ENCODE measurements at regions of chr15 and their contacts with region 1.

Region 1: GRCh38 chr15:52227456-52227855 is 36.3 kb upstream of the GNB5 start:
- DNase-seq: peak; percentile 82
- H3K4me3 ChIP-seq: no peak overlapping the region
- H3K27ac ChIP-seq: no peak overlapping the region
- H3K4me1 ChIP-seq: no peaks in the 10 kb centered on the region
- H3K27me3 ChIP-seq: no peaks in the 10 kb centered on the region
- CTCF ChIP-seq: peak; percentile 72 to 76
- POLR2A ChIP-seq: no peak

Region 2: GRCh38 chr15:51782357-51782896 is 445.0 kb before region 1 on chr15:
- CTCF ChIA-PET with region 1: interaction called, 7 read pairs
- POLR2A ChIA-PET with region 1: no interaction called
- dilution Hi-C with region 1: no loop called
- intact Hi-C with region 1: loop called (anchors 5 kb)
- DNase-seq: peak; percentile 25
- H3K4me3 ChIP-seq: no peak overlapping the region
- H3K27ac ChIP-seq: no peak overlapping the region
- H3K4me1 ChIP-seq: no peaks in the 10 kb centered on the region
- H3K27me3 ChIP-seq: peaks cover 0 to 3% of the 10 kb centered on the region in 2 experiments
- CTCF ChIP-seq: peak; percentile 39 to 45
- POLR2A ChIP-seq: no peak

Region 3: GRCh38 chr15:51907136-51907914 is 320.1 kb before region 1 on chr15:
- CTCF ChIA-PET with region 1: interaction called, 4 read pairs
- POLR2A ChIA-PET with region 1: no interaction called
- dilution Hi-C with region 1: no loop called
- intact Hi-C with region 1: loop called (anchors 10 kb)
- DNase-seq: no peak
- H3K4me3 ChIP-seq: no peak overlapping the region
- H3K27ac ChIP-seq: no peak overlapping the region
- H3K4me1 ChIP-seq: no peaks in the 10 kb centered on the region
- H3K27me3 ChIP-seq: no peaks in the 10 kb centered on the region
- CTCF ChIP-seq: no peak
- POLR2A ChIP-seq: no peak

Region 4: GRCh38 chr15:51982013-51982769 is 245.3 kb before region 1 on chr15:
- CTCF ChIA-PET with region 1: interaction called, 9 read pairs
- POLR2A ChIA-PET with region 1: interaction called, 4 read pairs
- dilution Hi-C with region 1: no loop called
- intact Hi-C with region 1: loop called (anchors 1 kb)
- DNase-seq: peak; percentile 94
- H3K4me3 ChIP-seq: peak overlapping the region; percentile 5 to 77 (median 10)
- H3K27ac ChIP-seq: peak overlapping the region; percentile 96
- H3K4me1 ChIP-seq: peaks cover 20% of the 10 kb centered on the region
- H3K27me3 ChIP-seq: no peaks in the 10 kb centered on the region
- CTCF ChIP-seq: peak in 1 of 2 donors; percentile 56
- POLR2A ChIP-seq: peak; percentile 38

Region 5: DNA sequence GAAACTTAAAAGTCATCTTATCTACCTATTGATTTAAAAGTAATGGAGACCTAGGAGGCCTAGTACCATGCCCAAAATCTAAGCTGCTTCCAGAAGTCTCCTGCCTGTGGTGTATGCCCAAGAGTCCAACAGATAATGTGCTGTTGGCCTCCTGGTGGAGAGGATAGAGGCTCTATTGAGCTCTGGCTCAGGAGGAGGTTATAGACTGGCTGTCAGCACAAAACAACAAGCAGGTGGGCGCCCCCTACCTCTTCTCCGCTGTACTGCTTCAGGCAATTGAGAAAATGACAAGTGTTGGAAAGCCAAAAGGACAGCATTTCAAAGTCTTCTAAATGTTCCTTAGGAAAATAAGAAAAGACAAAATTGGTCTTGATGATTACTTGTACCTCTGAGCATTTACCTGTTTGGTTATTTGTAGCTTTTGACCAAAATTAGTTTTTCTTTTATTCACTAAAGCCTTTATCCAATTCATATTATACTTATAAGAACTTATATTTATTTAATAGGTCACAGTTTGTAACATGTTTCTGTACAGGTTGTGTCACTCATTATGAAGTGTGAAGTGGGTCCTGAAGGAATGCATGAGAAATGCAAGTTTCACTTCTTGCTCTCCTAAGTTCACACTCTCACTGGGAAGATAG is 19.0 kb before region 1 on chr15:
- CTCF ChIA-PET with region 1: interaction called, 10 read pairs
- POLR2A ChIA-PET with region 1: no interaction called
- dilution Hi-C with region 1: no loop called
- intact Hi-C with region 1: no loop called
- DNase-seq: peak; percentile 73
- H3K4me3 ChIP-seq: no peak overlapping the region
- H3K27ac ChIP-seq: no peak overlapping the region
- H3K4me1 ChIP-seq: peaks cover 17% of the 10 kb centered on the region
- H3K27me3 ChIP-seq: no peaks in the 10 kb centered on the region
- CTCF ChIP-seq: peak; percentile 71 to 86
- POLR2A ChIP-seq: no peak

Region 6: DNA sequence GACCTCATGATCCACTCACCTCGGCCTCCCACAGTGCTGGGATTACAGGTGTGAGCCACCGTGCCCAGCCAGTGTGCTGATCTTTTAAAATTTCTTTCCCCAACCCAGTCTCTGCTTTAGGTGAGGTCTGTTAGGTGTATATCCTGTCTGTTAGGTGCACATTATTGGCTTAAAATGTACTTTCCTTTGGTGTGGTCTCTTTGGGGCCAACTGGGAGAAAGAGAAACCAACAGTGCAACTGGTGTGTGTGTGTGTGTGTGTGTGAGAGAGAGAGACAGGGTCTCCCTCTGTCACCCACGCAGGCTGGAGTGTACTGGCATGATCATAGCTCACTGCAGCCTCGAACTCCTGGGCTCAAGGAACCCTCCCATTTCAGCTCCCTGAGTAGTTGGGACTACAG is 14.0 kb after region 1 on chr15:
- CTCF ChIA-PET with region 1: interaction called, 27 read pairs
- POLR2A ChIA-PET with region 1: no interaction called
- dilution Hi-C with region 1: no loop called
- intact Hi-C with region 1: no loop called
- DNase-seq: no peak
- H3K4me3 ChIP-seq: no peak overlapping the region
- H3K27ac ChIP-seq: no peak overlapping the region
- H3K4me1 ChIP-seq: no peaks in the 10 kb centered on the region
- H3K27me3 ChIP-seq: no peaks in the 10 kb centered on the region
- CTCF ChIP-seq: no peak
- POLR2A ChIP-seq: no peak

Region 7: GRCh38 chr15:52735231-52736089 is 508.0 kb after region 1 on chr15:
- CTCF ChIA-PET with region 1: interaction called, 9 read pairs
- POLR2A ChIA-PET with region 1: no interaction called
- dilution Hi-C with region 1: no loop called
- intact Hi-C with region 1: loop called (anchors 1 kb)
- DNase-seq: peak; percentile 85
- H3K4me3 ChIP-seq: no peak overlapping the region
- H3K27ac ChIP-seq: no peak overlapping the region
- H3K4me1 ChIP-seq: peaks cover 11% of the 10 kb centered on the region
- H3K27me3 ChIP-seq: peaks cover 0 to 2% of the 10 kb centered on the region in 2 experiments
- CTCF ChIP-seq: peak; percentile 39 to 62
- POLR2A ChIP-seq: no peak

Measured in endothelial cell of umbilical vein (primary cell).